ENCODE measurements at regions of chr2 and their contacts with region 1.

Region 1: GRCh38 chr2:218292048-218293014 is at the start of gene TMBIM1:
- DNase-seq: peak; percentile 93
- CTCF ChIP-seq: peak; percentile 86

Region 2: GRCh38 chr2:218269899-218270720 is 22.2 kb before region 1 on chr2 and contains the starts of genes AAMP and PNKD:
- CTCF ChIA-PET with region 1: interaction called, 115 read pairs
- POLR2A ChIA-PET with region 1: interaction called, 9 read pairs
- DNase-seq: peak; percentile 99
- CTCF ChIP-seq: no peak

Region 3: GRCh38 chr2:218276986-218277755 is 15.2 kb before region 1 on chr2:
- CTCF ChIA-PET with region 1: interaction called, 115 read pairs
- POLR2A ChIA-PET with region 1: interaction called, 4 read pairs
- DNase-seq: no peak
- CTCF ChIP-seq: no peak

Region 4: DNA sequence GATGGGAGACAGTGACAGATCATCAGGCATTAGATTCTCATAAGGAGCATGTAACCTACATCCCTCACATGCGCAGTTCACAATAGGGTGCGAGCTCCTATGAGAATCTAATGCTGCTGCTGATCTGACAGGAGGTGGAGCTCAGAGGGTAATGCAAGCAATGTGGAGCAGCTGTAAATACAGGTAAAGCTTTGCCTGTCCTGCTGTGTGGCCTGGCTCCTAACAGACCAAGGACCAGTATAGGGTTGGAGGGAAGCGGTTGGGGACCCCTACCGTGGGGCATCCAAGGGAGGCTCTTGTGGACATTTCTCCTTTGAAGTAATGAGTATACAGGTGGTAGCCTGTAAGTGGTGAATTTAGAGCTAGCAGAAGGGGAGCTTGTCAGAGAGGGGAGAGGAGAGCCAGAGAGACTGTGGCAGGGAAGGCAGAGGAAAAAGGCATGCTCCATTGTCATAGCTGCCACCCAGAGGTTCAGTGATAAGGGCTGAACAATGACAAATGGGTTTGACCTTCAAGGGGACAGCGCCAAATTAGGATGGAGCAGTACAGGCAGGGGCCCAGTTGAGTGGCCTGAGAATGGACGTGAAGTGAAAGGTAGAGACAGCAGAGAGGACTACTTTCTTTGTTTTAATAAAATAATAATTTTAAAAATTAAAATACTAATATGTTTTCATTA is 15.2 kb after region 1 on chr2:
- CTCF ChIA-PET with region 1: interaction called, 23 read pairs
- POLR2A ChIA-PET with region 1: no interaction called
- DNase-seq: no peak
- CTCF ChIP-seq: no peak

Region 5: DNA sequence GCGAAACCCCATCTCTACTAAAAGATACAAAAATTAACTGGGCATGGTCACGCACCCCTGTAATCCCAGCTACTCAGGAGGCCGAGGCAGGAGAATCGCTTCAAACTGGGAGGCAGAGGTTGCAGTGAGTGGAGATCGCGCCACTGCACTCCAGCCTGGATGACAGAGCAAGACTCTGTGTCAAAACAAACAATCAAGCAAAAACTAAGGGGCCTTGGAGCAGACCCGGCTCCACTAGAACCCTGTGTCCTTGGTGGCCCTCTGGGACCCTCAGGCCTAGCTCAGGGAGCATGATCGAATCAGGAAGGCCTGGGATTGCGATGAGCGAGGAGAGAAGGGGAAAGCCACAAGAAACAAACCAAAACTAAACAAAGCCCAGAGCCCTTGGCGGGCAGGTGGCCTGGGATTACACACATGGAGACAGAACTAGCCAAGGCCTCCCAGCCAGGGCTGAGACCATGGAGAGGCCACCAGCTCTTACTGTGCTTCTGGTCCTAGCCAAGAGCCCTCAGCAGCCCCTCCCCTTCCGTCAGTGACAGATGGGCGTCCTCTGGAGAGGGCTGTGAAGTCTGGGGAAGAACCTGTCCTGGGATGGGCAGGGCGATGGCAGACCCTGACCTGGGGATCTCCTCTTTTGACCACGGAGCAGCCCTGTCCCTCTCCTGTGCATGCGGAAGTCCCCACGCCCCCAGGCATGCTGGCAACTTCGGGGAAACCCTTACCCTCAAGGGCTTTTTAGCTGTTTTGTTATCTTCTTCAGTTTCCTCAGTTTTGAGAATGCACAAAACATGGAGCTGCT is 36.9 kb after region 1 on chr2:
- CTCF ChIA-PET with region 1: interaction called, 10 read pairs
- POLR2A ChIA-PET with region 1: no interaction called
- DNase-seq: peak; percentile 75
- CTCF ChIP-seq: no peak

Region 6: GRCh38 chr2:218395797-218396687 is 103.7 kb after region 1 on chr2:
- CTCF ChIA-PET with region 1: interaction called, 37 read pairs
- POLR2A ChIA-PET with region 1: no interaction called
- DNase-seq: peak; percentile 93
- CTCF ChIP-seq: peak; percentile 77